H1 (cell line): ENCODE measurements at regions of chr2 and their contacts with region 1.

Region 1: DNA sequence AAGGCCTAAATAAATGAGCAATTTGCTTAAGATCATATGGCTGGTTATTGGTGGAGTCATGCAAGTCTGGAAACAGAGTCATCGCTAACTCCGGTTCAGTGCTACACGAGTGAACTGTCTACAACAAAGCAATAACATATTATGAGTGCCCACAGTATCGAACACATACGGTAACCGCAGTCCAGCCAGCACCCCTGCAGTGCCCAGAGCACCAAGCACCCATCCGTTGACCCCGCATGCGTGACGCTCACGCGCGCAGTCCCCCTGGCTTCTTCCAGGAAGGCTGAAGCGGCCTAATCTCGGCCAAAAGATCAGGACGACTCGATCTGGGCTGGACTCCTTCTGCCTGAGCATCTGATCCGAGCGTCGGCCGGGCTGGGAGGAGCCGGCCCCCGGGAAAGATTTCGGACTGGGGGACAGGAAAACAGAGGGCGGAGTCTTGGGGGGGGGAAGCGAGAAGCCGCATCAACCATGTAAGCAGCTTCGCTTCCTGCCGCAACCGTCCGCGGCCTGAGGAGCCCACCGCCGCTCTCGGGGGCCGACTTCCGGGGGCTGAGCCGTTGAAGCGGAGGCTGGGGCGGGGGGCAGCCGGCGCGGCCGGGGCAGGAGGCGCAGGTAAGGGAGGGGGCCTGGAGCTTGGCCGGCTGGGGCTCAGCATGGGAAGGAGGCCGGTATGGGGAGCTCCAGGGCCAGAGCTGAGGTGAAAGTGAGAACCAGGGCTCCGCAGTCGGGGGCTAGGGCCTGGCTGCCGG is at the start of gene PIKFYVE:
- DNase-seq: peak; percentile 92 to 93
- H3K4me3 ChIP-seq: peak within 1 kb of the TSS; percentile 85 to 87 (median 86)
- H3K27ac ChIP-seq: peak within 1 kb of the TSS; percentile 50
- H3K4me1 ChIP-seq: peaks cover 0 to 8% (median 4%) of the 10 kb centered on the region in 4 experiments; a peak in 5 of 7 replicates
- H3K27me3 ChIP-seq: no peaks in the 10 kb centered on the region
- CTCF ChIP-seq: no peak
- EP300 ChIP-seq: peak in 1 of 2 experiments; percentile 56; a peak in 1 of 3 replicates
- POLR2A ChIP-seq: peak; percentile 52 to 64
- RAD21 ChIP-seq: no peak
- total RNA-seq, gene PIKFYVE: 33.5 and 35.8 TPM in 2 replicates

Region 2: DNA sequence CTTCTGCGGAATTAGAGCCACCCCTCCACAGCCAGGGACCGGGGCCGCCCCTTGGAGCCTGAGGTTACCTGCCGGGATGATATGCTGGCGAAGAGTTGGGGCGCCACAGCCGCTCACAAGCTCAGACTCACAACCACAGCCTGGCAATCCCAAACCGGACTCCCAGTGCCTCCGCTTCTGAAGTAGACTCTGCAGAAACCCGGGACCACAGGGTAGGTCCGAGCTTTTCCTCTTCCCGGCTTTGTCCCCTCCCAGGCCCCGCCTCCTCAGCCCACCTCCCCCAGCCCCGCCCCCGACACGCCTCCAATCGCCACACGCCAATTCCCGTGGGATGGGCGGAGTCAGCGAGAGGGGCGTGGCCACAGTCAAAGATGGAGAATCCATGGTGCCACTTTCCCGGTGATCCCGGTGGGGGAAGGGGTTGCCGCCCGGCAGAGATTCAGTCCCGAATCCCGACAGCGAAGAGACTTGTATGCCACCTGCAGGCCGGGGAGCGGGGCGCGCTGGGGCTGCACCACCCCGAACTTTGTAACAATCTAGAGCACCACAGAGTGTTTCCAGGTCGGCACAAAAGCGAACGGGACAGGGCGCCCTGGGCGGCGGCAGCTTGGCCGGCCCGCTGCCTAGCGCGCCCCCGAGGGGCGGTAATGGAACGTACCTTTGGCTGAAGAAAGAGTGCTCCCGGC is 11.0 kb before region 1 on chr2 and contains the start of gene IDH1:
- CTCF ChIA-PET with region 1: interaction called, 26 read pairs
- POLR2A ChIA-PET with region 1: interaction called, 68 read pairs
- DNase-seq: peak; percentile 83 to 100
- H3K4me3 ChIP-seq: peak within 1 kb of the TSS; percentile 85 to 100 (median 99)
- H3K27ac ChIP-seq: peak within 1 kb of the TSS; percentile 82
- H3K4me1 ChIP-seq: peaks cover 0 to 5% (median 3%) of the 10 kb centered on the region in 4 experiments; a peak in 2 of 7 replicates
- H3K27me3 ChIP-seq: no peaks in the 10 kb centered on the region
- CTCF ChIP-seq: peak; percentile 50 to 57 (median 52); a peak in 3 of 4 replicates
- EP300 ChIP-seq: no peak
- POLR2A ChIP-seq: peak; percentile 38 to 62; a peak in 2 of 3 replicates
- RAD21 ChIP-seq: peak; percentile 46 to 48
- total RNA-seq, gene IDH1: 379 and 398 TPM in 2 replicates